AG04450 (cell line): ENCODE measurements at regions of chr11 and their contacts with region 1.

Region 1: GRCh38 chr11:96254087-96254486 is 88.9 kb downstream of the MAML2 start:
- DNase-seq: no peak
- H3K4me3 ChIP-seq: no peak overlapping the region
- H3K27ac ChIP-seq: no peak overlapping the region
- H3K27me3 ChIP-seq: no peaks in the 10 kb centered on the region
- CTCF ChIP-seq: no peak

Region 2: DNA sequence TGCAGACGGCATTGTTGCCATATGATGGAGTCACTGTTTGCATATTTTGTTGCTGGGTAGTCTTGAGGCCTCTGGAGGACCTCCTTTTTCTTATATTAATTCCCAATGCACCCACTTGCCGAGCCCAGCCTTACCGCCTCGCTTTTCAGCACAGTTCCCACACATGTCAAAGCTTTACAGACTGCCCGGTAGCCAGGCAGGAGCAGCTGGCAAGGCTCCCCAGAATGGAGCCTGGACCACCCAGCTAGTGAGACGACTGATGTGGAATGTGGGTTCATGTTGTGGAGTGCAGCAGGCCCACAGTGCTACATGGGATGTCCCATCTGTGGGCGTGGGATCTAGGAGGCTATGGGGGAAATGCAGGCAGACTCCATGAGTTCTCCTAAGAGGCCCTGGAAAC is 230.8 kb before region 1 on chr11:
- CTCF ChIA-PET with region 1: no interaction called
- POLR2A ChIA-PET with region 1: no interaction called
- DNase-seq: no peak
- H3K4me3 ChIP-seq: no peak overlapping the region
- H3K27ac ChIP-seq: no peak overlapping the region
- H3K27me3 ChIP-seq: no peaks in the 10 kb centered on the region
- CTCF ChIP-seq: no peak

Region 3: GRCh38 chr11:96134602-96135001 is 119.5 kb before region 1 on chr11:
- CTCF ChIA-PET with region 1: no interaction called
- POLR2A ChIA-PET with region 1: interaction called, 11 read pairs
- DNase-seq: no peak
- H3K4me3 ChIP-seq: no peak overlapping the region
- H3K27ac ChIP-seq: no peak overlapping the region
- H3K27me3 ChIP-seq: no peaks in the 10 kb centered on the region
- CTCF ChIP-seq: no peak